OCI-LY7 (cell line): ENCODE measurements at regions of chr10 and their contacts with region 1.

Region 1: DNA sequence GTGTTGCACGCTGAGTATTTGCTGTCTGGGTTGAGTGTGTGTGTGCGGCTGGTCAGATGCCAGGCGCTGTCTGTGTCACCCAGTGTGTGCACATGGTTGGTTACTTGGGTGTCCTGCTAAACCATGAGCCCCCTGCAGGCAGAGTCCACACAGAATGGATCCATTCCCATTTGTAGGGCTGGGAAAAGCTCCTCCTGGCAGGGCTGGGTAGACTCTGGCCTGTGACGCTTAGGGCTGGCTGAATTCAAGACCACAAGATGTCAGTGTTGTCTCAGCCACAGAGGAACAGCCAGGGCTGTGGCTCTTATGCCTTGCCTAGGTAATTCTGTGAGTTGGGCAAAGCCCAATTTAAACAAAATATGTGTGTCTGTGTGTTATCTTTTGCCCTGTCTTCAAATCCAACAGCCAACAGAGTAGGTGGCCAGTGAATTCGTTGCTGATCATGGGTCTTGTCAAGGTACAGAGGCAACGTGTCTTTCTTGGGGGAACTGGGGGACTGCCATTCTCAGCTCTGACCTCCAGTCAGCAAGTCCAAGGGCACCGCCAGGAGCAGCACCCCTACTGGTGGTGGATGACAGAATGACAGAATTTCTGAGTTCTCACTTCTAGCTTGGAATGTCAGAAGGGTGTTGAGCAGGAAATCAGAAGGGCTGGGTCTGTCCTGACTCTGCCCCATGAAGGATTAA is 285.1 kb downstream of the CCSER2 start:
- DNase-seq: peak; percentile 54
- H3K4me3 ChIP-seq: no peak overlapping the region
- H3K27ac ChIP-seq: no peak overlapping the region
- H3K4me1 ChIP-seq: no peaks in the 10 kb centered on the region
- CTCF ChIP-seq: peak; percentile 77

Region 2: DNA sequence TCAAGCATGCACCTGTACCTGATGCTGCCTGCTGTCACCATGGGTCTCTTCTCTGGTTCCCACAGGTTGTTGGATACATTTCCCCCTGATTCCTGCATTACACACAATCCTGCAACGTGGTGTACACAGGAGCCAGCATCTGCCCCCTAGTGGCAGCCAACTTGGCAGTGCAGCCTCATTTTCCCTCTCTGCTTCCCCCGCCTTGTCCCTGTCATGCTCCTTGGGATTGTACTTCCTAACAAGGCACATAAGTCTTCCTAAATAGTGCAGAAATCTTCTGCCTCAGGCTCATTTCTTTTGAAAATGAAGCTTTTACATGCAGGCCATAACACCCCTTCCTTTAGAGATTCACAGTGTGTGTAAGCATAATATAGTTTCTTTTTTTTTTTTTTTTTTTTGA is 102.4 kb after region 1 on chr10:
- CTCF ChIA-PET with region 1: no interaction called
- POLR2A ChIA-PET with region 1: no interaction called
- intact Hi-C with region 1: loop called (anchors 1 kb)
- DNase-seq: peak; percentile 59
- H3K4me3 ChIP-seq: no peak overlapping the region
- H3K27ac ChIP-seq: no peak overlapping the region
- H3K4me1 ChIP-seq: no peaks in the 10 kb centered on the region
- CTCF ChIP-seq: peak; percentile 85

Region 3: DNA sequence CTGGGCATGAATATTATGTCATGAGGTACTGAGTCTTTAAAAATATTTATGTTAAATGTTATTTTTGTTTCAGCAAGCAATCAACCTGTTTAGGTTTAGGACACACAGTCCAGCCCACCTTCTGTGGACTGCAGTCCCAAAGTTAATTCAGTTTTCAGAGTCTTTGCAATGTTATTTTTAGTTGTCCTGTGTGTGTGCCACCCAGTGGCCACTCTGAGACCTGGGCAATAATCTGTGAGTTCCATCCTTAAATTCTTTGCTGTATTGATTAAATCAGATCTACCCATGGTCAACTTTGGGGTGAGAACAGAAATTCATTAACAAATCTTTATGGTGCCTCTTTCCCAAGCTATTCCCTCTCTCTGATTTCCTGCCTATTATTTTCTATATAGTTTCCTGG is 130.0 kb after region 1 on chr10:
- CTCF ChIA-PET with region 1: no interaction called
- POLR2A ChIA-PET with region 1: no interaction called
- intact Hi-C with region 1: loop called (anchors 1 kb)
- DNase-seq: peak; percentile 2
- H3K4me3 ChIP-seq: no peak overlapping the region
- H3K27ac ChIP-seq: no peak overlapping the region
- H3K4me1 ChIP-seq: no peaks in the 10 kb centered on the region
- CTCF ChIP-seq: peak; percentile 66